ENCODE measurements at regions of chr12 and their contacts with region 1.

Region 1: GRCh38 chr12:120317224-120318105 is 10.1 kb downstream of the PLA2G1B start:
- DNase-seq: peak; percentile 100
- ATAC-seq: peak; percentile 100
- H3K4me3 Mint-ChIP-seq: peak overlapping the region; percentile 90
- H3K27ac Mint-ChIP-seq: peak overlapping the region; percentile 81
- H3K4me1 Mint-ChIP-seq: peaks cover 8% of the 10 kb centered on the region
- H3K27me3 Mint-ChIP-seq: no peaks in the 10 kb centered on the region

Region 2: DNA sequence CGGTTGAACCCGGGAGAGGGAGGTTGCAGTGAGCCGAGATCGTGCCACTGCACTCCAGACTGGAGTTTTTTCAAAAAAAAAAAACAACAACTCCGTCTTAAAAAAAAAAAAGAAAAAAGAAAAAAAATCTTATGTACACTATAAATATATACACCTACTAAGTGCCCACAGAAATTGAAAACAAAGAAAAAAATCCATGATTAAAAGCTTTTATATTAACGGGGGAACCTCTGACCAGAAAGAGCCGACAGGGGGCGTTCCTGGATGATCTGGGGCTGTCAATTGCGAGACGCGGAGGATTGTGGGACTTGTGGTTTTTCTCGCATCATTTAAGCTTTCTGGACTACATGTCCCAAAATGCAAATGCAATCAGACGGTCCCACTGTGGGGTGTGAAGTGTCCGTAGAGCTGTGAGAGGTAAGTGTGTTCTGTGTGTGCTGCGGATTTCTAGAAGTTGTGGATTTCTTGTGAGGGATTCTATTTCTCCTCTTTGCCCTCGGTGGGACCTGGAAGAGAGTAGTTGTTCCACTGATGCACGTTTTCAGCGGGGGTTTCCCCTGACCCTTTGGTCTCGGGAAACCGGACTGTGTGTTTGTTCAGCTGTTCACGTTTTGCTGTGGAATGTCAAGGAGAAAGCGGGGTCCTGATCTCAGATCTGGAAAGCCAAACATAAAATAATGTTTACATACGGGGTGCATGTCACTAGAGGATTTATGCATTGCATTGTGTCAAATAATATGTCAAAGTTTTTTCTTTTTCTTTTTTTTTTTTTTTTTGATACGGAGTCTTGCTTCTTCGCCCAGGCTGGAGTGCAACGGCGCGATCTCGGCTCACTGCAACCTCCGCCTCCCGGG is 15.3 kb before region 1 on chr12 and contains the start of gene SIRT4:
- POLR2A ChIA-PET with region 1: interaction called, 16 read pairs
- DNase-seq: peak; percentile 76
- ATAC-seq: peak; percentile 99
- H3K4me3 Mint-ChIP-seq: peak within 1 kb of the TSS; percentile 95
- H3K27ac Mint-ChIP-seq: peak within 1 kb of the TSS; percentile 92
- H3K4me1 Mint-ChIP-seq: peaks cover 4% of the 10 kb centered on the region
- H3K27me3 Mint-ChIP-seq: no peaks in the 10 kb centered on the region
- total RNA-seq, gene SIRT4: 1.7 to 2.6 TPM

Measured in activated naive CD8-positive, alpha-beta T cell treated with anti-CD3 and anti-CD28 coated beads, Interleukin-2, amount 10 ng/mL, durations not matched to agents 7 days and 5 days (primary cell).